ENCODE measurements at regions of chr1 and their contacts with region 1.

Region 1: GRCh38 chr1:154607609-154608396 is at the start of gene ADAR:
- DNase-seq: peak; percentile 96
- H3K4me3 ChIP-seq: peak within 1 kb of the TSS; percentile 81
- H3K27ac ChIP-seq: peak within 1 kb of the TSS; percentile 81
- H3K4me1 ChIP-seq: peaks cover 43% of the 10 kb centered on the region
- CTCF ChIP-seq: peak; percentile 42; the same call in 1 of the 2 replicates
- total RNA-seq, gene ADAR: 87.8 and 90.2 TPM in 2 replicates

Region 2: DNA sequence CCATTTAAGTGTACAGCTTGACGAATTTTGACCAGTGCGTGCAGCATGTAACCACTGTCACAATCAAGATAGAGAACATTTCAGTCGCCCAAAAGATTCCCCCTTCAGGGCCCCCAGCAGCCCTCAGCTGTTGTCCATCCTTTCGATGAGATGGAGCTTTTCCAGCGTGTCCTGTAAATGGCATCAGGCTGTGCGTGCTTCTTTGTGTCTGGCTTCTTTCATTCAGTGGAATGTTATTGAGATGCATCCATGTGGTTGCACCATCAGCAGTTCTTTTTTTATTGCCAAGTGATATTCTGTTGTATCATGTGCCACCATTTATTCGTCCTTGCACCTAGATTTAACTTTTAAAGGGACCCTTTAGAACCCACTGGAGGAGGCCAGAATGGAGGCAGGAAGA is 71.2 kb before region 1 on chr1:
- CTCF ChIA-PET with region 1: no interaction called
- POLR2A ChIA-PET with region 1: no interaction called
- intact Hi-C with region 1: no loop called
- DNase-seq: no peak
- H3K4me3 ChIP-seq: no peak overlapping the region
- H3K27ac ChIP-seq: no peak overlapping the region
- H3K4me1 ChIP-seq: no peaks in the 10 kb centered on the region
- CTCF ChIP-seq: no peak

Region 3: DNA sequence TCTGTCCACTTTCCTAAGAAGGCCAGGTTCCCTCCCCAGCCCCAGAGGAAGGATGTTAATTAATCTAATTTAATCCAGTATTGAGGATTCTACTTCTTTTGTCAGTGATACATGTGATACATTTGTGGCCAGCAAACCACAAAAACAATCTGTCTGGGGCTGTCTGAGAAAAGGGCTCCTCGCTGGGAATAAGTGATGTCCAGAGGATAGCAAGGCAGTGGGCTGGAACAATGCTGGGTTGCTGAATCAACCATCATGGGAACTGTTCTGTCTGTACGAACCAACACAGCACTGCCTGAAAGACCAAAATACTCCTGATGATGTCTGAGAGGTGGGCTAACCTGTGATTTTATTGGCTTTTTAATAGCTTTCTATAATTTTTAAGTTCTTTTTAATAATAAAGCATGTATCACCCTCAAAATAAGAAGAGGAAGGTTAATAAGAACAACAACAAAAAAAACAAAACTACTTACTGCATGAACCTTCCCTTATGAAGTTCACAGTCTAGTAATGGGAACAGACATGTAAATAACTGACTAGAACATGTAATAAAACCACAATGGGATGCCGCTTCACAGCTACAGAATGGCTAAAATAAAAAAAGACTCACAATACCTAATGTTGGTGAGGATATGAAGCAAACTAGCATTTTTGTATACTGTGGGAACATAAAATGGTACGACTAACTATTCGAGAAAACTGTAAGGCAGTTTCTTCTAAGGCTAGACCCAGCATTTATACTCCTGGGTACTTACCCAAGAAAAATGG is 11.6 kb after region 1 on chr1:
- CTCF ChIA-PET with region 1: no interaction called
- POLR2A ChIA-PET with region 1: interaction called, 14 read pairs
- intact Hi-C with region 1: no loop called
- DNase-seq: no peak
- H3K4me3 ChIP-seq: no peak overlapping the region
- H3K27ac ChIP-seq: no peak overlapping the region
- H3K4me1 ChIP-seq: peaks cover 9% of the 10 kb centered on the region
- CTCF ChIP-seq: no peak

Region 4: DNA sequence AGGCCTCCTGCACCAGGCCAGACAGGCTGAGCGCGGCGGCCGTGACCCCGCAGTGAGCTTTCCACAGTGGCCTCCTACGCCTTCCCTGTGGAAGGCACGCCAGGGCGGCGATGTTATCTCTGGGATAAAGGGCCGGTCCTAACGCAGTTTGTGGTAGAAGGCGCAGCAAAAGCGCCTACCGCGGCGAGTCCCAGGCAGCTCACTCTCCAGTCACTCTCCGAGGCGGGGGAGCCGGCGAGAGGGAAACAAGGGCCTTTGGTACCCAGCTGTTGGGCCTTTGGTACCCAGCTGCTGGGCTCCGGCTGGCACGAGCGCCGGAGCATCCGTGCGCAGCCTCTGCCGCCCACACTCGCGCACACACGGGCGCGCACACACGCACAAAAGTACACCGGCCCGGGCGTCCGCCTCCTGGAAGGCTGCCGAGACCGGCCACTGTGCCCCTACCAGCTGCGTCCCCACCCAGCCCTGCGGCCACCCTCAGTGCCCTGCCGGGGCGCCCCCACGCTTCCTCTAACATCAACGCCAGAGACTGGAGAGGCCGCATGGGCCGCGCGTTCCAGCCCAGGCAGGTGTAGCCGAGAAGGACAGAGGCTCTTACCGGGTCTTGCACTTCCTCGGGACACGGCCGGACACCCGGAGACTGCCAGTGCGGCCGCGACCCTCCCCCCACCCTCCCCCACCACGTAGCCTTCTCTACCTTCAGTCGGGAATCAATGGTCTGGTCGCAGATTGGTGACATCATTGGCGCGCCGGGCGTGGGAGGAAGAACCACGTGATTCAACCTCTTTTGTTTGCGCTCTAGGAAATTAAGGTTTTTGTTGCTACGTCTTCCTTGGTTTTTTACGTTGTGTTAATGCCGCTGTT is 19.7 kb after region 1 on chr1:
- CTCF ChIA-PET with region 1: no interaction called
- POLR2A ChIA-PET with region 1: interaction called, 4 read pairs
- intact Hi-C with region 1: loop called (anchors 1 kb)
- DNase-seq: peak; percentile 89
- H3K4me3 ChIP-seq: peak overlapping the region; percentile 92
- H3K27ac ChIP-seq: peak overlapping the region; percentile 48
- H3K4me1 ChIP-seq: peaks cover 14% of the 10 kb centered on the region
- CTCF ChIP-seq: peak; percentile 37; the same call in 1 of the 2 replicates

Region 5: GRCh38 chr1:154863315-154864174 is 255.7 kb after region 1 on chr1:
- CTCF ChIA-PET with region 1: no interaction called
- POLR2A ChIA-PET with region 1: no interaction called
- intact Hi-C with region 1: loop called (anchors 5 kb)
- DNase-seq: peak; percentile 83
- H3K4me3 ChIP-seq: peak overlapping the region; percentile 59
- H3K27ac ChIP-seq: peak overlapping the region; percentile 91
- H3K4me1 ChIP-seq: peaks cover 98% of the 10 kb centered on the region
- CTCF ChIP-seq: peak; percentile 93

Region 6: GRCh38 chr1:154896771-154897391 is 289.1 kb after region 1 on chr1:
- CTCF ChIA-PET with region 1: no interaction called
- POLR2A ChIA-PET with region 1: no interaction called
- intact Hi-C with region 1: no loop called
- DNase-seq: no peak
- H3K4me3 ChIP-seq: no peak overlapping the region
- H3K27ac ChIP-seq: no peak overlapping the region
- H3K4me1 ChIP-seq: no peaks in the 10 kb centered on the region
- CTCF ChIP-seq: no peak